ENCODE measurements at regions of chr12 and their contacts with region 1.

Region 1: GRCh38 chr12:62724947-62725447 is 210.0 kb downstream of the PPM1H start:
- DNase-seq: peak in 1 of 10 donors; percentile 45
- H3K4me3 ChIP-seq: no peak overlapping the region
- H3K27ac ChIP-seq: peak overlapping the region in 18 of 59 donors; percentile 1 to 84 (median 24)
- H3K27me3 ChIP-seq: no peaks in the 10 kb centered on the region
- CTCF ChIP-seq: no peak

Region 2: DNA sequence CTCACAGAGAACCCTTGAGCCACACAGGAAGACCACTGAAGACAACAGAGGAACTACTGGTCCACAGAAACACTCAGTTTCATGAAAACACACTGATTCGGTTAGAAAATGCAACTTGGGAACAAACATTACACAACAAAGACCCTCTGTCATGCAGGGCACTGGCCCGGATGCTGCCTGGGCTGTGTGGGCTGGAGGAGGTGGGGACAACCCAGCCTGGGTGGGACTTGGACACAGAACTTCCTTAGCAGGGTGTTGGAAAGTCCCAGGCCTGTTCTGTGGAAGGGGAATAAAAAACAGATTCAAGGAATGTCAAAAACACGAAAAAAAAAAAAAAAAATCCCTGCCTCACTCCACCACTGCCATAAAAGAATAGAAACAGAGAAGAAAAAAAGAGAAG is 77.4 kb before region 1 on chr12:
- intact Hi-C with region 1: loop called in 1 of 2 experiments (anchors 5 kb)
- DNase-seq: peak in 5 of 10 donors; percentile 39 to 73 (median 58)
- H3K4me3 ChIP-seq: peak overlapping the region in 1 of 59 donors; percentile 7
- H3K27ac ChIP-seq: peak overlapping the region in 57 of 59 donors; percentile 21 to 92 (median 79)
- H3K27me3 ChIP-seq: no peaks in the 10 kb centered on the region
- CTCF ChIP-seq: no peak

Region 3: DNA sequence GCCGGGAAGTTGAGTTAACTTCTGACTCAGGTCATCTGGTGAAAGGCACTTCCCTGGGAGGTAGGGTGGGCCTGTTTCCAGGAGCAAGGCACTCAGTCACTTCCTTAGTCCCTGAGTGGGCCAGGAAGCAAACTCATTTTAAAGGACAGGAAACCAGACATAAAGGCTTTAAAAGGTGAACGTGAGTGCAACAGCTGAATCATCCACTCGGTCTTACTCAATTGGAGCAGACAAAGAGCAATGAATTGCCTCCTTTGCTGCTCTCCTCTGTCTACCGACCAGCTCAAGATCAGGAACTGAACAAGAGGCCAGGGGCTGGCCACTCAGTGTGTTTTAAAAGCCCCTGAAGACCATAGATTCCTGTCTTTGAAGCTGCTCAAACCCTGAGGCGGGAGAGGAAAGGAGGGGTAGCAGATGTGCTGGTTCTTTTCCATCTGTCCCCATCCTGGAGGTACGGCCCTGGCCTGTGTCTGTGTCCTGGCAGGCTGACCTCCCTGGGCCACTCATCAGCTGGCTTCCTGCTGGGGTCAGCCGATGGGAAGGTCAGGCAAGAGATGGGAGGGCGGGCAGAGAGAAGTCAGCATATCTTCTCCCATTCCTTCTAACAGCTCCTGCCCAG is 61.1 kb after region 1 on chr12:
- intact Hi-C with region 1: loop called in 1 of 2 experiments (anchors 10 kb)
- DNase-seq: no peak
- H3K4me3 ChIP-seq: no peak overlapping the region
- H3K27ac ChIP-seq: peak overlapping the region in 45 of 59 donors; percentile 12 to 83 (median 57)
- H3K27me3 ChIP-seq: no peaks in the 10 kb centered on the region
- CTCF ChIP-seq: no peak

Region 4: GRCh38 chr12:62919838-62920237 is 194.8 kb after region 1 on chr12:
- intact Hi-C with region 1: no loop called
- DNase-seq: peak in 7 of 10 donors; percentile 46 to 74 (median 68)
- H3K4me3 ChIP-seq: peak overlapping the region in 5 of 59 donors; percentile 4 to 23 (median 6)
- H3K27ac ChIP-seq: peak overlapping the region in 58 of 59 donors; percentile 48 to 97 (median 92)
- H3K27me3 ChIP-seq: no peaks in the 10 kb centered on the region
- CTCF ChIP-seq: no peak

Region 5: DNA sequence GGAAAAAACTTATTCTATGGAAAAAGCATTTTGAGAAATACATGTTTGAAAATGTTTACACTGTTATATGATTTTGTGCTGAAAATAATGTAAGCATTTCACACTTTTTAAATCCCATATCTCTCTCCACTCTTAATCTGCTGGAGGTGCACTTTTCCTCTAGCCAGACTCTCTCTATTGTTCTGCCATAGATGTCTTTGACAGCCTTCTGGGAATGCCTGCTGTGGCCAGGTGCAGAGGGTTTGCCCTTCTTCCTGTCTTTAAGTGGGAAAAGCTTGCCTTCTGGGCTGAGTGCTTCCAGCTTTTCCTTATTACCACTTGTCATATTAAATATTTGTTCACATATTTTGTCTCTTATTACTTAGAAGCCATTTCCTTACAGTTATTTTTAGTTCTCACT is 270.1 kb after region 1 on chr12:
- intact Hi-C with region 1: no loop called
- DNase-seq: no peak
- H3K4me3 ChIP-seq: no peak overlapping the region
- H3K27ac ChIP-seq: no peak overlapping the region
- H3K27me3 ChIP-seq: no peaks in the 10 kb centered on the region
- CTCF ChIP-seq: no peak

Measured in dorsolateral prefrontal cortex (tissue), 120 donors.